ENCODE measurements at regions of chr5 and their contacts with region 1.

Region 1: DNA sequence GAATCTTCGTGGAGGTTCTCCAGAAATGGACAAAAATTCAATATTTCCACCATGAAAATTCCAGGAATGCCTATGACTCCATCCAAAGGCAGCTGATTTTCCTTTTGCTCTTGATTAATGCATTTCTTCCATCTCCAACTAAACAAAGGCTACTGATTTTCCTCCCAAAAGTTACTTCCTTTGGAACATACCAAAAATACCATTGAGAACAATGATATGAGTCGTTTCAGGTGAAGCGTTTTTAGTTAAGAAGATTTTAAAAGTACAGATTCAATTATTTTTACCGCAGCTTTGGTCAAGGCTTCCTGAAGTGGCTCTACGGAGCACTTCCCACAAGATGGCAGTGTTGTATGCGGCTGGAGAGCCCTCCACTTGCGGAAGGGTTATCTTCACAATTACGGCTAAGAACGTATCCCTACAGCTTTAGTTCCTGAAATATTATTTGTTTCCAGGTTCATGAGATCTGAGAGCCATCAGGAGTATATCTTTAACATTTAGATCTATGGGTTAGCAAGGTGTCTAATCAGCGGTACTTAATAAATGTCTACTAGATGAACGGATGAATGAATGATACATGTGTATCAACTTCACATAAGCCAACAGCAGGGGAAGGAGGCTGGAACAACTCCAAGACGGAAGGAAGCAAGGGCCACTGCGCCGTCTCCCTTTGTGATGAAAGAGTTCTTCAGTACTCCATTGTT is 35.9 kb upstream of the ARSB start:
- DNase-seq: peak in 1 of 2 donors; percentile 75
- H3K4me3 ChIP-seq: peak overlapping the region in 1 of 2 donors; percentile 22
- H3K27ac ChIP-seq: peak overlapping the region in 1 of 2 donors; percentile 14
- H3K4me1 ChIP-seq: peaks cover 0 to 11% of the 10 kb centered on the region in 2 donors
- H3K27me3 ChIP-seq: no peaks in the 10 kb centered on the region
- CTCF ChIP-seq: peak; percentile 37 to 77 (median 77)

Region 2: DNA sequence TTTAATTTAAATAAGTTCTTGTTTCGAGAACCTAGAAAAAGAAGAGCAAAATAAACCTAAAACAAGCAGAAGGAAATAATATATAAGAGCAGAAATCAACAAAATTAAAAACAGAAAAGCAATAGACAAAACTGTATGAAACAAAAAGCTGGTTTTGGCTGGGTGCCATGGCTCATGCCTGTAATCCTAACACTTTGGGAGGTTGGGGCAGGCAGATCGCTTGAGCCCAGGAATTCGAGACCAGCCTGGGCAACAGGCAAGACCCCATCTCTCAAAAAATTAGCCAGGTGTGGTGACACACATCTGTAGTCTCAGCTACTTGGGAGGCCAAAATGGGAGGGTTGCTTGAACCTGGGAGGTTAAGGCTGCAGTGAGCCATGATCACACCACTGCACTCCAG is 1323.3 kb before region 1 on chr5:
- intact Hi-C with region 1: no loop called
- DNase-seq: no peak
- H3K4me3 ChIP-seq: no peak overlapping the region
- H3K27ac ChIP-seq: no peak overlapping the region
- H3K4me1 ChIP-seq: no peaks in the 10 kb centered on the region
- H3K27me3 ChIP-seq: no peaks in the 10 kb centered on the region
- CTCF ChIP-seq: no peak

Region 3: GRCh38 chr5:78273436-78273835 is 747.6 kb before region 1 on chr5:
- intact Hi-C with region 1: no loop called
- DNase-seq: no peak
- H3K4me3 ChIP-seq: no peak overlapping the region
- H3K27ac ChIP-seq: no peak overlapping the region
- H3K4me1 ChIP-seq: peaks cover 0 to 10% of the 10 kb centered on the region in 2 donors
- H3K27me3 ChIP-seq: no peaks in the 10 kb centered on the region
- CTCF ChIP-seq: no peak

Region 4: DNA sequence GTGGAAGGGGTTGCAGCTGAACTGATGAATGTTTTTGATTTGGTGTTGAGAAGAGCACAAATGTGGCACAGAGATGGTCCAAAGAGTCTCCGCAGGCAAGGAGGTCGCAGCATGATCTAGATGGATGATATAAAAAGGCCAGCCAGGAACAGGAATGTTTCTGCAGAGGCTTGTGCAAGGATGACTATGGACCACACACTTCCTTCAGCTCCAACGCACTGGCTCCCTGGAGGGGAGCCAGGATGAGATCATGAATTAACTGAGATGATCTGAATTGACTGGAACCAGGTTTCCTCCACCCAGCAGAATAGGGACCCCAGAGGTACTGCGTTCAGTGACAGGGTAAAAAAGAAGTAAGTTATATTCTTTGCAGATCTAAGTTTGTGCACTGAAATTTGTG is 124.9 kb before region 1 on chr5:
- intact Hi-C with region 1: no loop called
- DNase-seq: no peak
- H3K4me3 ChIP-seq: no peak overlapping the region
- H3K27ac ChIP-seq: no peak overlapping the region
- H3K4me1 ChIP-seq: no peaks in the 10 kb centered on the region
- H3K27me3 ChIP-seq: no peaks in the 10 kb centered on the region
- CTCF ChIP-seq: no peak

Region 5: GRCh38 chr5:78936548-78936947 is 84.5 kb before region 1 on chr5:
- intact Hi-C with region 1: no loop called
- DNase-seq: no peak
- H3K4me3 ChIP-seq: no peak overlapping the region
- H3K27ac ChIP-seq: no peak overlapping the region
- H3K4me1 ChIP-seq: no peaks in the 10 kb centered on the region
- H3K27me3 ChIP-seq: no peaks in the 10 kb centered on the region
- CTCF ChIP-seq: no peak

Region 6: GRCh38 chr5:79464695-79465332 is 443.8 kb after region 1 on chr5:
- intact Hi-C with region 1: loop called (anchors 2 kb)
- DNase-seq: no peak
- H3K4me3 ChIP-seq: no peak overlapping the region
- H3K27ac ChIP-seq: no peak overlapping the region
- H3K4me1 ChIP-seq: no peaks in the 10 kb centered on the region
- H3K27me3 ChIP-seq: no peaks in the 10 kb centered on the region
- CTCF ChIP-seq: peak in 2 of 3 experiments; percentile 28 to 59

Measured in ascending aorta (tissue), 2 donors.